ENCODE measurements at regions of chr17 and their contacts with region 1.

Region 1: GRCh38 chr17:48618256-48618897 is 3.3 kb upstream of the HOXB8 start:
- DNase-seq: peak; percentile 77
- ATAC-seq: peak; percentile 84
- H3K4me3 Mint-ChIP-seq: no peak overlapping the region
- H3K27ac Mint-ChIP-seq: peak overlapping the region; percentile 9
- H3K4me1 Mint-ChIP-seq: peaks cover 26% of the 10 kb centered on the region
- H3K27me3 Mint-ChIP-seq: peaks cover 78% of the 10 kb centered on the region
- CTCF ChIP-seq: peak; percentile 66

Region 2: DNA sequence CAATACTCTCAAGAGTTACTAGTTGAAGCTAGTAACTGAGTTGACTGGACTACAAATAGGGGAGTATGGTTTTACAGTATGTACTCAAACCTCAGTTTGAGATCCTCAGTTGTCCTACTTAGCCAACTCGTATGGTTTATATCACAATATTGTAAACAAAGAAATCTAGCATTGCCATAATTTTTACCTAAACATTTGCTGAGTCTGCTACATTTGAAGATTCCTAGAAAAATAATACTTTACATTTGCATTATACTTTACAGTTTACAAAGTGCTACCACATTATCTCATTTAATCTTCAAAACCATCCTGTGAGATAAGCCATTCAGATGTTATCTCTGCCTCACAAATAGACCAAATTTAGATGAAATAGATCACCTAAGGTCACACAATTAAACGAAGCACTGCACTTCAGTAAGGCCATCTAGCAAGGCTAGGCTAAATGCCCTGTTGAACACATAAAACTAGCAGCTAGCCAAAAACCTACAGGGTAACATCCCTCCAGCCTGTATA is 533.4 kb before region 1 on chr17:
- CTCF ChIA-PET with region 1: no interaction called
- POLR2A ChIA-PET with region 1: no interaction called
- intact Hi-C with region 1: loop called (anchors 2 kb)
- DNase-seq: no peak
- ATAC-seq: no peak
- H3K4me3 Mint-ChIP-seq: no peak overlapping the region
- H3K27ac Mint-ChIP-seq: no peak overlapping the region
- H3K4me1 Mint-ChIP-seq: peaks cover 5% of the 10 kb centered on the region
- H3K27me3 Mint-ChIP-seq: no peaks in the 10 kb centered on the region
- CTCF ChIP-seq: no peak

Region 3: GRCh38 chr17:48259694-48260291 is 358.6 kb before region 1 on chr17:
- CTCF ChIA-PET with region 1: interaction called, 13 read pairs
- POLR2A ChIA-PET with region 1: no interaction called
- intact Hi-C with region 1: loop called (anchors 1 kb)
- DNase-seq: no peak
- ATAC-seq: no peak
- H3K4me3 Mint-ChIP-seq: no peak overlapping the region
- H3K27ac Mint-ChIP-seq: no peak overlapping the region
- H3K4me1 Mint-ChIP-seq: no peaks in the 10 kb centered on the region
- H3K27me3 Mint-ChIP-seq: no peaks in the 10 kb centered on the region
- CTCF ChIP-seq: no peak

Region 4: DNA sequence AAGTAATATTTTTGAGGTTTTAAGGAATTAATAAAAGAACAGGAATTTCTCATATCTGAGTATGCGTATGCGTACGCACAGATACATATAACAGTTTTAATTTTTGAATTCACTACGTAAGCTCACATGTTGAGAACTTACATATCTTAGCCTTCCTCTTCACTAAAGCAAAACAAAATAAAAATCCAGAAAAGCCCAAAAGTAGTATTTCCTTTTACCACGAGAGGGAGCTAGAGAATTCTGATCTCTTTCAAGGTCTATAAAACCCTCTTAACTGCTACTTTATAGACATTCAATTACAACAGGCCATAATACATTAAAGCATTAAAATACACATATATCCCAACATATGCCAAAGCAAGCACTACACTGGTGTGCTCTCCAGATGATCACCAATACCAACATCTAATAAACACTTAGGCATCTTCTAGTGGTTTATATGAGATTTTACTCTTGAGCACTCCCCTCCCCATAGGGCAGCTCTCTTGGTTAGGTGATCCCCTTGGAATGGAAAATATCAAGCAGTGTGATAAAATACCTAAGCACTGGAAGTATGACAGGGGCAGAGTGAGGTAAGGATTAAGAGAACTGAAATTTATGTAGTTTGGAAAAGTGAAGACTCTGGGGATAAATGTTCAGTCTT is 282.4 kb before region 1 on chr17:
- CTCF ChIA-PET with region 1: interaction called, 12 read pairs
- POLR2A ChIA-PET with region 1: no interaction called
- intact Hi-C with region 1: loop called (anchors 1 kb)
- DNase-seq: no peak
- ATAC-seq: peak; percentile 47
- H3K4me3 Mint-ChIP-seq: no peak overlapping the region
- H3K27ac Mint-ChIP-seq: no peak overlapping the region
- H3K4me1 Mint-ChIP-seq: no peaks in the 10 kb centered on the region
- H3K27me3 Mint-ChIP-seq: no peaks in the 10 kb centered on the region
- CTCF ChIP-seq: peak; percentile 60

Measured in activated B cell treated with CpG ODN at 0.5 μM for 24 hours (primary cell).